ENCODE measurements at regions of chr12 and their contacts with region 1.

Region 1: DNA sequence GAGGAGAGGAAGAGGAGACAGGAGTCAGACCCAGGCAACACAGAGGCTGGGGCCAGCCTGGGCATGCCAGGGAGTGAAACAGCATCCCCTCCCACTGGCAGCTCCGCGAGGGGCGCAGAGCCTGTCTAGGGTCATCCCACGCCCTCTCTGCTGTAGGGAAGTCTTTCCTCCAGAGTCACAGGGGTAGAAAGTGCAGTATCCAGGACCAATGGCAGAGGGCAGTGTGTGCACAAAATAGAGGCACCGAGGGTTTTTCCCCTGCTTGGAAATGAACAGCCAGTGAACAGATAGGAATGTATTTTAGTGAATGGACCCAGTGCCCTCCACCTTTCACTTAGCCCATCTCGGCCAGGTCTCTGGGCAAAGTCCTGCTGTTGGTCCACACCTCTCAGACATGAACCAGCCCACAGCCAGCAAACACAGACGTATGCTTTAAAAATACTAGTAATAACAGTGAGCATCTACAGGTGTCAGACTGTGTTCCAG is 9.4 kb upstream of the KRT74 start:
- DNase-seq: peak; percentile 59
- H3K4me3 Mint-ChIP-seq: no peak overlapping the region
- H3K27ac Mint-ChIP-seq: no peak overlapping the region
- H3K4me1 Mint-ChIP-seq: peaks cover 33% of the 10 kb centered on the region
- H3K27me3 Mint-ChIP-seq: peaks cover 13% of the 10 kb centered on the region

Region 2: GRCh38 chr12:52615208-52615868 is 32.3 kb after region 1 on chr12:
- intact Hi-C with region 1: loop called (anchors 1 kb)
- DNase-seq: no peak
- H3K4me3 Mint-ChIP-seq: no peak overlapping the region
- H3K27ac Mint-ChIP-seq: no peak overlapping the region
- H3K4me1 Mint-ChIP-seq: peaks cover 64% of the 10 kb centered on the region
- H3K27me3 Mint-ChIP-seq: no peaks in the 10 kb centered on the region

Region 3: DNA sequence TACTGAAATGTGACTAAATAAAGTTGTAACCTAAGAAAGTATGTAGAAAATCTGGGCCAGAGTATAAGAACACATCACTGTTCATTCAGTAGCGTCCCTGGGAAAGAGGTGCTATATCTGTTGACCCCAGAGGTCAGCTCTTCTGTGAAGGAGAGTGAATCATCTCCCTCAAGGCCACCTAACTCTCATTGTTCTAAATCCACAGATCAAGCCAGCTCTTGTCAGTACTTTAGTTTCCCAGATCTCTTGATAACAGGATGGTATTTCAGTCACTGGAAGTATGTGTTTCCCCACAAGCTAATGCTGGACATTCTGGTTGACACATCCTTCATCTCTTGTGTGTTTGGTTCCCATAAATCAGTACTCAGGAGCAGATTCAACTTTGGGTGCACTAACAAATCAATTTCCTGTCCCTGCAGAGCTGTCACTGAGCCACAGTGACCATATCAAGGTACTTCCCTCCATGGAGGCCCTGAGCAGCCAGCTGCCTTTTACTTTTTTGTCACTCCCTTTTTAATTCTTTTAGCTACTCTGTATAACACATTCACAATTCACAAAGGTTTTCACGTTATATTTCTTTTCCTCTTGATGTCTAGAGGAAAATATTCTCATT is 89.4 kb after region 1 on chr12:
- intact Hi-C with region 1: no loop called
- DNase-seq: no peak
- H3K4me3 Mint-ChIP-seq: no peak overlapping the region
- H3K27ac Mint-ChIP-seq: no peak overlapping the region
- H3K4me1 Mint-ChIP-seq: no peaks in the 10 kb centered on the region
- H3K27me3 Mint-ChIP-seq: peaks cover 17% of the 10 kb centered on the region

Region 4: GRCh38 chr12:52865090-52865944 is 282.3 kb after region 1 on chr12:
- intact Hi-C with region 1: loop called (anchors 1 kb)
- DNase-seq: no peak
- H3K4me3 Mint-ChIP-seq: no peak overlapping the region
- H3K27ac Mint-ChIP-seq: no peak overlapping the region
- H3K4me1 Mint-ChIP-seq: peaks cover 8% of the 10 kb centered on the region
- H3K27me3 Mint-ChIP-seq: peaks cover 5% of the 10 kb centered on the region

Region 5: GRCh38 chr12:52879394-52880351 is 296.7 kb after region 1 on chr12:
- intact Hi-C with region 1: loop called (anchors 1 kb)
- DNase-seq: peak; percentile 69
- H3K4me3 Mint-ChIP-seq: peak overlapping the region; percentile 72
- H3K27ac Mint-ChIP-seq: no peak overlapping the region
- H3K4me1 Mint-ChIP-seq: peaks cover 9% of the 10 kb centered on the region
- H3K27me3 Mint-ChIP-seq: peaks cover 13% of the 10 kb centered on the region

Measured in activated T-helper 1 cell treated with anti-CD3 and anti-CD28 coated beads, Interleukin-12 subunit alpha, Interleukin-12 subunit beta, Interleukin-2, Interleukin-4 antibody, amounts not matched to agents 30 ng/mL and 10 ng/mL and 1 ng/mL, durations not matched to agents 14 hours and 24 hours and 36 hours (primary cell).